Activated CD4-positive, alpha-beta T cell treated with anti-CD3 and anti-CD28 coated beads for 36 hours (primary cell): ENCODE measurements at regions of chr17 and their contacts with region 1.

Region 1: GRCh38 chr17:2244545-2245525 is 58.8 kb downstream of the SMG6 start:
- DNase-seq: peak; percentile 92
- ATAC-seq: peak; percentile 80
- H3K4me3 Mint-ChIP-seq: no peak overlapping the region
- H3K27ac Mint-ChIP-seq: no peak overlapping the region
- H3K4me1 Mint-ChIP-seq: peaks cover 41% of the 10 kb centered on the region
- H3K27me3 Mint-ChIP-seq: no peaks in the 10 kb centered on the region

Region 2: GRCh38 chr17:2064980-2065785 is 179.7 kb before region 1 on chr17:
- CTCF ChIA-PET with region 1: interaction called, 87 read pairs
- POLR2A ChIA-PET with region 1: interaction called, 3 read pairs
- intact Hi-C with region 1: no loop called
- DNase-seq: peak; percentile 89
- ATAC-seq: peak; percentile 83
- H3K4me3 Mint-ChIP-seq: no peak overlapping the region
- H3K27ac Mint-ChIP-seq: no peak overlapping the region
- H3K4me1 Mint-ChIP-seq: peaks cover 20% of the 10 kb centered on the region
- H3K27me3 Mint-ChIP-seq: peaks cover 5% of the 10 kb centered on the region

Region 3: GRCh38 chr17:2179615-2180295 is 65.1 kb before region 1 on chr17:
- CTCF ChIA-PET with region 1: interaction called, 15 read pairs
- POLR2A ChIA-PET with region 1: no interaction called
- intact Hi-C with region 1: no loop called
- DNase-seq: no peak
- ATAC-seq: no peak
- H3K4me3 Mint-ChIP-seq: no peak overlapping the region
- H3K27ac Mint-ChIP-seq: no peak overlapping the region
- H3K4me1 Mint-ChIP-seq: no peaks in the 10 kb centered on the region
- H3K27me3 Mint-ChIP-seq: no peaks in the 10 kb centered on the region

Region 4: GRCh38 chr17:2198927-2199326 is 45.9 kb before region 1 on chr17:
- CTCF ChIA-PET with region 1: interaction called, 23 read pairs
- POLR2A ChIA-PET with region 1: interaction called, 3 read pairs
- intact Hi-C with region 1: loop called (anchors 5 to 10 kb)
- DNase-seq: no peak
- ATAC-seq: no peak
- H3K4me3 Mint-ChIP-seq: no peak overlapping the region
- H3K27ac Mint-ChIP-seq: no peak overlapping the region
- H3K4me1 Mint-ChIP-seq: peaks cover 44% of the 10 kb centered on the region
- H3K27me3 Mint-ChIP-seq: no peaks in the 10 kb centered on the region

Region 5: GRCh38 chr17:2222901-2223616 is 21.8 kb before region 1 on chr17:
- CTCF ChIA-PET with region 1: interaction called, 23 read pairs
- POLR2A ChIA-PET with region 1: no interaction called
- intact Hi-C with region 1: no loop called
- DNase-seq: peak; percentile 73
- ATAC-seq: peak; percentile 73
- H3K4me3 Mint-ChIP-seq: peak overlapping the region; percentile 25
- H3K27ac Mint-ChIP-seq: peak overlapping the region; percentile 57
- H3K4me1 Mint-ChIP-seq: peaks cover 38% of the 10 kb centered on the region
- H3K27me3 Mint-ChIP-seq: no peaks in the 10 kb centered on the region

Region 6: GRCh38 chr17:2259769-2260536 is 15.1 kb after region 1 on chr17:
- CTCF ChIA-PET with region 1: interaction called, 25 read pairs
- POLR2A ChIA-PET with region 1: no interaction called
- intact Hi-C with region 1: no loop called
- DNase-seq: peak; percentile 90
- ATAC-seq: peak; percentile 74
- H3K4me3 Mint-ChIP-seq: peak overlapping the region; percentile 64
- H3K27ac Mint-ChIP-seq: peak overlapping the region; percentile 90
- H3K4me1 Mint-ChIP-seq: peaks cover 73% of the 10 kb centered on the region
- H3K27me3 Mint-ChIP-seq: no peaks in the 10 kb centered on the region

Region 7: GRCh38 chr17:2275722-2276121 is 30.9 kb after region 1 on chr17:
- CTCF ChIA-PET with region 1: interaction called, 78 read pairs
- POLR2A ChIA-PET with region 1: no interaction called
- intact Hi-C with region 1: no loop called
- DNase-seq: peak; percentile 13
- ATAC-seq: no peak
- H3K4me3 Mint-ChIP-seq: no peak overlapping the region
- H3K27ac Mint-ChIP-seq: peak overlapping the region; percentile 52
- H3K4me1 Mint-ChIP-seq: peaks cover 56% of the 10 kb centered on the region
- H3K27me3 Mint-ChIP-seq: no peaks in the 10 kb centered on the region